ENCODE measurements at regions of chr1 and their contacts with region 1.

Region 1: DNA sequence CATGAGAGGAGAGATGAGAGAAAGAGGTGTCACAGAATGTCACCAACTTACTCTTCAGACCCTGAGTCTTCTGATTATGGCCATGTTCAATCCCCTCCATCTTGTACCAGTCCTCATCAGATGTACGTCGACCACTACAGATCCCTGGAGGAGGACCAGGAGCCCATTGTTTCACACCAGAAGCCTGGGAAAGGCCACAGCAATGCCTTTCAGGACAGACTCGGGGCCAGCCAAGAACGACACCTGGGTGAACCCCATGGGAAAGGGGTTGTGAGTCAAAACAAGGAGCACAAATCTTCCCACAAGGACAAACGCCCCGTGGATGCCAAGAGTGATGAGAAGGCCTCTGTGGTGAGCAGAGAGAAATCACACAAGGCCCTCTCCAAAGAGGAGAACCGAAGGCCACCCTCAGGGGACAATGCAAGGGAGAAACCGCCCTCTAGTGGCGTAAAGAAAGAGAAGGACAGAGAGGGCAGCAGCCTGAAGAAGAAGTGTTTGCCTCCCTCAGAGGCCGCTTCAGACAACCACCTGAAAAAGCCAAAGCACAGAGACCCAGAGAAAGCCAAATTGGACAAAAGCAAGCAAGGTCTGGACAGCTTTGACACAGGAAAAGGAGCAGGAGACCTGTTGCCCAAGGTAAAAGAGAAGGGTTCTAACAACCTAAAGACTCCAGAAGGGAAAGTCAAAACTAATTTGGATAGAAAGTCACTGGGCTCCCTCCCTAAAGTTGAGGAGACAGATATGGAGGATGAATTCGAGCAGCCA is 8.0 kb downstream of the ELOA start:
- DNase-seq: peak; percentile 76
- H3K4me3 ChIP-seq: no peak overlapping the region
- H3K27ac ChIP-seq: no peak overlapping the region
- H3K4me1 ChIP-seq: peaks cover 7% of the 10 kb centered on the region
- CTCF ChIP-seq: peak; percentile 92

Region 2: GRCh38 chr1:23718482-23718881 is 32.8 kb before region 1 on chr1:
- CTCF ChIA-PET with region 1: no interaction called
- POLR2A ChIA-PET with region 1: no interaction called
- intact Hi-C with region 1: loop called (anchors 5 kb)
- DNase-seq: peak; percentile 56
- H3K4me3 ChIP-seq: no peak overlapping the region
- H3K27ac ChIP-seq: no peak overlapping the region
- H3K4me1 ChIP-seq: peaks cover 22% of the 10 kb centered on the region
- CTCF ChIP-seq: peak; percentile 90

Region 3: DNA sequence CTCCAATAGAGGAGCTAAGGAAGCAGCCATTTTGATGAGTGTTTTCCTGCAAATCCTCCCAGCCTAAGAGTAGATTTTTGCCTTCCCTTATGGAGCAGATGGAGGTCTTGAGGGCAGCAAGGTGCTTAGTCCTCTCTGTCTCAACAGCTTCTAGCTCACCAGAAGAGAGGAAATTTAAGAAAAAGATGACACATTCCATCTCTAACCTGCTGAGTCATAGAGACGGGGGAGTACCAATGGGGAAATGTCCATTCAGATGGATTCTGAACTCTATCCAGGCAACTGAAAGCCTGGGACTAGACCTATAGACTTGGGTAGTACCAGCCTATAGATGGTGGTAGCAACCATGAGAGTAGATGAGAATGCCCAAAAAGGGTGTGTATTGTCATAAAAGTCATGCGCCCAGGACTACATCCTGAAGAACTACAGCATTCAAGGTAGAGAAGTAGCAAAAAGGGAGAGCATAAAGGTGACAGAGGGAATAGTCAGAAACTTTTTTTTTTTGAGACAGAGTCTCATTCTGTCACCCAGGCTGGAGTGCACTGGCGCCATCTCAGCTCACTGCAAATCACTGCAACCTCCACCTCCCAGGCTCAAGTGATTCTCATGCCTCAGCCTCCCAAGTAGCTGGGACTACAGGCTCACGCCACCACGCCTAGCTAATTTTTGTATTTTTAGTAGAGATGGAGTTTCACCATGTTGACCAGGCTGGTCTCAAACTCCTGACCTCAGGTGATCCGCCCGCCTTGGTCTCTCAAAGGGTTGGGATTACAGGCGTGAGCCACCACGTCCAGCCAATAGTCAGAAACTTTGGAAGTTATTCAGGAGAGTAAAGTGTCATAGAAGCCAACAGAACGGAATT is 18.6 kb before region 1 on chr1:
- CTCF ChIA-PET with region 1: no interaction called
- POLR2A ChIA-PET with region 1: no interaction called
- intact Hi-C with region 1: no loop called
- DNase-seq: no peak
- H3K4me3 ChIP-seq: no peak overlapping the region
- H3K27ac ChIP-seq: no peak overlapping the region
- H3K4me1 ChIP-seq: peaks cover 21% of the 10 kb centered on the region
- CTCF ChIP-seq: no peak

Region 4: GRCh38 chr1:24036088-24036487 is 284.9 kb after region 1 on chr1:
- CTCF ChIA-PET with region 1: no interaction called
- POLR2A ChIA-PET with region 1: no interaction called
- intact Hi-C with region 1: no loop called
- DNase-seq: no peak
- H3K4me3 ChIP-seq: no peak overlapping the region
- H3K27ac ChIP-seq: no peak overlapping the region
- H3K4me1 ChIP-seq: no peaks in the 10 kb centered on the region
- CTCF ChIP-seq: no peak

Region 5: DNA sequence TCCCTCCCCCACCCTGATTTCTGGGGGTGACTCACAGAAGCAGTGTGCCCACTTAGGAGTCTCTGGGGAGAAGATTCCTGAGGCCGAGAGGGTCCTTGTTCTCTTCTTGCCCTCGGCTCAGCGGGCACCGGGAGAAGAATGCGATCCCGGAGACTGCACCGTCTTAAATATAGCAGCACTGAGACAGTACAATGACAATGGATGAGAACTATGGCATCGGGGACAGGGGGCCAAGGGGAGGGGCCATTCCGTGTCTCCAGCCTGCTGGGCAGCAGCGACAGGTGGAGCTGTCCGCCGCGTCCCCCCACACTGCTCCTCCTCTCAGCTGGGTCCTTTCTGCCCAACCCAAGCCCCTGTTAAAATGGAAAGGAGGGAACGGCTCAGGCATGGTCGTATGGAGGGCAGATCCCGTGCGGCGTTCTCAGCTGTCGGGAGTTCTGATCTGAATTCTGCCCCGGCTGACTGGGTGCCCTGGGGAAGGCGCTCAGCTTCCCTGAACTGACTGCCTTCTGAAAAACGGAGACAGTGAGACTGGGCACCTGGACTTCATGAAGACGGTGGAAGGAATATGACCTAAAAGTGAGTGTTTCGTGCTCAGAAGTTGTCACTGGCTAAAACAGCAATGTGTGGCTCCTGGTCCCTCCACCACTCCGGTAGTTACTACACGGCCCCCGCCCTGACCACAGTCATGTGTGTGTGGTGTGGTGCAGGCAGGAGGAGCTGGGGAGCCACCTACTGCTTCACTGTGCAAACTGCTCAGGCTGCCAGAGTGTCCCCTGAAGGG is 361.0 kb after region 1 on chr1 and contains the start of gene MYOM3:
- CTCF ChIA-PET with region 1: no interaction called
- POLR2A ChIA-PET with region 1: no interaction called
- intact Hi-C with region 1: no loop called
- DNase-seq: peak; percentile 50
- H3K4me3 ChIP-seq: no peak within 1 kb of the TSS
- H3K27ac ChIP-seq: no peak within 1 kb of the TSS
- H3K4me1 ChIP-seq: no peaks in the 10 kb centered on the region
- CTCF ChIP-seq: peak; percentile 68
- total RNA-seq, gene MYOM3: not detected in 2 replicates